ENCODE measurements at regions of chr3 and their contacts with region 1.

Region 1: DNA sequence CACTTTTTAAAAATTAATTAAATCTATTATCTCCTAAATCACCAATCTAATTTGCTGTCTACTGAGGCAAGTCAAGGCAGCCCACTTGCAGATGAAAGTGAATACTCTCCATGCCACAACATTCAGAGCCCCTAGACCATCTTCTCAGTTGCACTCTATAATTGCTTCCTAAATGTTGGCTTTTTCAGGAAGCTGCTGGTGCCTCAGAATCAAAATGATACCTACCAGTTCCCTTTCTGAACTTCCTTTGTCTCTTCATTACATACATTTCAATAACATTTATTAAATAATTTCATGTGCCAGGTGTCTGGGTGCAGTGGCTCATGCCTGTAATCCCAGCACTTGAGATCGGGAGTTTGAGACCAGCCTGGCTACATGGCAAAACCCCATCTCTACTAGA is 124.1 kb downstream of the SERPINI1 start:
- DNase-seq: no peak
- ATAC-seq: no peak
- H3K4me3 Mint-ChIP-seq: no peak overlapping the region
- H3K27ac Mint-ChIP-seq: no peak overlapping the region
- H3K4me1 Mint-ChIP-seq: peaks cover 16% of the 10 kb centered on the region
- H3K27me3 Mint-ChIP-seq: no peaks in the 10 kb centered on the region
- CTCF ChIP-seq: no peak

Region 2: DNA sequence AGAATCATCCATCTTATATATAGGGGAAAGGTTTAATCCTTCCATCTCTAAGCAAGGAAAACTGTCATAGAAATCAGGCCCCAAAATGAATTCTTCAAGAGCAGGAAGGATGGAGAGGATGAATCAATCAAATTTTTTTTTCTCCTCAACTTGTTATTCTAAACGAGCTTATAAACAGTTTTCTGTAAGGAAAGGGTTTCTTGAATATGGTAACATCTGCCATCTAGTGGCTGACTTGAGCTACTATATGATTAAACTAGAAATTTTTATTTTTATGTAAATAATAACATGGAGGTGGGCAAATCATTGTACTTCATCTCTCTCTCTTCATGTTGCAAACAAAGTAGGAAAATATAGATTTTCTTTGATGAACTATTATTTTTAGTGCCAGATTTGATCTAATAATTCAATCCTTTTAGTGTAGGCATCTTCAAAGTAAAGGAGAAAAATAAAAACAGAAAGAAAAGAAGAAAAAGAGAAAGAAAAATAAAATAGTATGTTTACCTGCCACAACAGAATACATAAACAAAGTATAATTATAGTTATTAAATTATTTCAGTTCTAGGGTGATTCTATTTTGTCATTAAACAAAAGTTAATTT is 22.6 kb after region 1 on chr3:
- CTCF ChIA-PET with region 1: interaction called, 11 read pairs
- POLR2A ChIA-PET with region 1: no interaction called
- DNase-seq: no peak
- ATAC-seq: peak; percentile 49; the same call in 1 of the 2 replicates
- H3K4me3 Mint-ChIP-seq: no peak overlapping the region
- H3K27ac Mint-ChIP-seq: no peak overlapping the region
- H3K4me1 Mint-ChIP-seq: no peaks in the 10 kb centered on the region
- H3K27me3 Mint-ChIP-seq: no peaks in the 10 kb centered on the region
- CTCF ChIP-seq: peak; percentile 44

Measured in WTC11 (cell line).